PC-9 (cell line): ENCODE measurements at regions of chr2 and their contacts with region 1.

Region 1: DNA sequence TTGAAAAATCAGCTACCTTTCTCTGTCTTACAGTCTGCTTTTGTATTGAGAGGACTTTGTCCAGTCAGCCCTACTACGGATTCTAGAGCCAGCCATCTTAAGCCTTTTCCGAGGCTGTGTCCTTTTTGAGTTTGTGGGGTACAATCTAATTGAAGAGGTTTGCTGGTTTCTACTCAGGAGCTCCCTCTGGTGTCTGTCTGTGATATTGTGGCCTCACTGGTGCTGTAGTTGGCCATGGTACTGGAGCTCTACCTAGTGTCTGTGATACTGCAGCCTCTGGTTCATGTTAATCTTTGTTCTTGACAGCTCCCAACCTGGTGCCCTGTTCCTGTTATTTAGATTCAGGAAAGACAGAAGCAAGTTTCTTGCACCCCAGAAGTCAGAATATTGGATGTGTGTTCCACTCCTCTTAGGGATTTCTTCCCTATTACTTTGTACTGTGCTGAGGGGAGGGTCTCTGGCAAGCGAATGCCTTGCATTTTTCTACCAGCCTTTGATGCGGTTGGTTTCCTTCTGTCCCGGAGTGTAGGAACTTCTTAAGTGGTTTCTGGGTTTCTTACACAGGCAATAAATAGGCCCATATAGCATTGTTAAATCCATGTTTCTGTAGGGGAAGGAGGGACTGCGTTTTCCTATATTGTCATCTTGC is 78.5 kb downstream of the ACSL3 start:
- DNase-seq: peak; percentile 69 to 81
- H3K4me3 ChIP-seq: no peak overlapping the region
- H3K27ac ChIP-seq: peak overlapping the region; percentile 0; the same call in 1 of the 2 replicates
- H3K4me1 ChIP-seq: peaks cover 33% of the 10 kb centered on the region
- H3K27me3 ChIP-seq: no peaks in the 10 kb centered on the region
- CTCF ChIP-seq: peak; percentile 99

Region 2: DNA sequence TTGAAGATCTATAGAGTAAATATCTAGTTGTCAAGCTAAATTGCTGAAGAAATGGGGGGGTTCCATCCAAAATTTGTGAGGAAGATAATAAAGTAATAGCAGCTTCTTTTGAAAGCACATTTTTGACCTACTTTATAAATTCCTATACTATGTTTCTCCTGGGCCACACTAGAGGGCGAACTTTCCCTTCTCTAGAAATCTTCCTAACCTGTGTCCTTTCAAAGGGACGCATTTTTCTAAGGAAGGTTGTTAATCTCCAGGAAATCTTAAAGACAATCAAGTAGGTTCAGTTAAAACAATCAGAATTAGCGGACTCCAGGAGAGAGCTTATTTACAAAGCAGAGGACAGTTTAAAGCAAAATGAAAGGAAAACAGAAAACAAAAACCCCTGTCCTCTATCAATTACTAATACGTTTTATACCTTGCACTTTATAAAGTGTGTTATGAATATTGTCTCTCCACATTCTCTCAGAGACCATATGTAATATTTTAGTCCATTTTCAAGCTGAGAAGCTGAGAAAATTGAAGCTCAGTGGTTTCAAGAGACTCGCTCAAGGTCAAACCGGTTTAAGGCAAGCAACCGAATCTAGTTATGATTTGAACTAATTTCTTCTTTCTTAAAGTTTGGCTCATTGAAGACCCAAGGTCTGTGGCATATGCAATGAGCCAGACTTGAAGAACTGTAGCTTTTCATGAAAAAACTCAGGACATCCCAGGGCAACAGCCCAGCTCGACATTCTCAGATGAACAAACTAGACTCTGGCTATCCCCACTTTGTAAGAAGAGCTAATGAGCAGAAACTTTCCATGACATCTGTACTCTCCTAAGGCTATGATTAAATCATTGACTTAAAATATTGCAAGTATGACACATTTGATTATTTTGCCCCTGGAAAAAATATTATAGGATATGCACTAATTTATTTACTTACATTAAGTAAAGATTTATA is 914.1 kb before region 1 on chr2:
- CTCF ChIA-PET with region 1: interaction called, 14 read pairs
- POLR2A ChIA-PET with region 1: no interaction called
- intact Hi-C with region 1: no loop called
- DNase-seq: peak; percentile 15 to 62
- H3K4me3 ChIP-seq: no peak overlapping the region
- H3K27ac ChIP-seq: no peak overlapping the region
- H3K4me1 ChIP-seq: no peaks in the 10 kb centered on the region
- H3K27me3 ChIP-seq: no peaks in the 10 kb centered on the region
- CTCF ChIP-seq: peak; percentile 96

Region 3: DNA sequence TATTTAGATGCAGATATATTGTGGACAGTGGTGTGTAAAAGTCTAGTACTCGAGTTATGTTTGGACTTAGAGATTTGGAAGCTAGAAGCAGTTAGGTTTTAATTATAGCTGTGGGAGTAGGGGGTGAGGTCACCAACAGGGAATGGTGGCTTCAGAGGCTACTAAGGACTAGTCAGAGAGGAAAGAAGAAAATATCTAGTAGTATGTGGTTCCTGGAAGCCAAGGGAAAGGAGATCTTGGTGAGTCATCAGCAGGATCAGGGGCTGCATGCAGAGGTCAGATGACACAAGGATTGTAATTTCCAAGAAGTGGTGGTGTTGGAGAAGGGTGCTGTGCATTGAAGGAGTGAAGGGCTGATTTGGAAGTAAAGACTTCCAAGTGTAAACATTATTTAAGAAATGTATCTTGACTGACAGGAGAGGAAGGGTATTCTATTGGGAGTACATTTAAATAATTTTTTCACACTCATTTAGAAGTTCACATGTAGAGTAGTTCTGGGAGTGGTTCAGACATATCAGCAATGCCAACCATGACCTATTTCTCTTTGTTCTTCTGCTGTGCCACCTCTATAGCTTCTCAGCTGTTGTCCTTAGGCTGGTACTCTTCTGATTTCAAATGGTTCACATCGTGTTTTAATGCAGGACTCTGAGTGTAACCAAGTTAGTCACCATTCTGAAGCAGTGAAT is 19.3 kb before region 1 on chr2:
- CTCF ChIA-PET with region 1: interaction called, 10 read pairs
- POLR2A ChIA-PET with region 1: interaction called, 4 read pairs
- intact Hi-C with region 1: loop called (anchors 1 kb)
- DNase-seq: peak; percentile 47 to 72
- H3K4me3 ChIP-seq: no peak overlapping the region
- H3K27ac ChIP-seq: peak overlapping the region; percentile 22
- H3K4me1 ChIP-seq: peaks cover 28% of the 10 kb centered on the region
- H3K27me3 ChIP-seq: no peaks in the 10 kb centered on the region
- CTCF ChIP-seq: no peak

Region 4: GRCh38 chr2:222959336-222959735 is 20.0 kb after region 1 on chr2:
- CTCF ChIA-PET with region 1: interaction called, 20 read pairs
- POLR2A ChIA-PET with region 1: interaction called, 6 read pairs
- intact Hi-C with region 1: loop called (anchors 1 kb)
- DNase-seq: peak; percentile 96 to 98
- H3K4me3 ChIP-seq: no peak overlapping the region
- H3K27ac ChIP-seq: peak overlapping the region; percentile 55
- H3K4me1 ChIP-seq: peaks cover 18% of the 10 kb centered on the region
- H3K27me3 ChIP-seq: no peaks in the 10 kb centered on the region
- CTCF ChIP-seq: peak; percentile 79